K562 (cell line): ENCODE measurements at regions of chr17 and their contacts with region 1.

Region 1: DNA sequence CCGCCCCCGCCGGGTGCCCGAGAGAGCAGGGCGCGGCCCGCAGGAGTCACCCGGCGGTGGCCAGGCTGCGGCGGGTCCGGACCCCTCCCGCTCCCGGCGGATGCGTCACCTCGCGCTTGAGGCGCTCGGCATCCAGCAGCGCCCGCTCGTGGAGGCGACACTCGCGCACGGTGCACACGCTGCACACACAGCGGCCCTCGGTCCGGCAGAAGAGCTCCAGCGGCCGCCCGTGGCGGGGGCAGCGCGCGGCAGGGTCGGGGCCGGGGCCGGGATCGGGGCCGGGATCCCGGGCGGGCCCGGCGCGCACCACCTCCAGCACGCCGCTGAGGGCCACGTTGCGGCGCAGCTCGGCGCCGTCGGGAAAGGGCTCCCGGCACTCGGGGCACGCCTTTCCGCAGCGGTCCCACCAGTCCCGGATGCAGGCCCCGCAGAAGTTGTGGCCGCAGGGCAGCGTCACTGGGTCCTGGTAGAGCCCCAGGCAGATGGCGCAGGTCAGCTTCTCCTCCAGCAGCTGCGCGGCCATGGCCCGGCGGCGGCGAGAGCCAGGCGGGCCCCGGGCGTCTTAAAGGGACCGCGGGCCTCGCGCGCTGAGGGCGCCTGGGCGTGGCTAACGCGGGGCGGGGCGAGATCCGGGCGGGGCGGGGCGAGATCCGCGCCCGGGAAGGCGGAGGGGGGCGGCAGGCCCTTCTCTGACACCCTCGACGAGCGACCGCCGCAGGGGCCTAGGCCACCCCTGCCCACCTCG is at the start of gene TRIM65:
- DNase-seq: peak; percentile 87 to 93 (median 92)
- ATAC-seq: peak; percentile 89
- H3K4me3 ChIP-seq: peak within 1 kb of the TSS; percentile 93
- H3K27ac ChIP-seq: peak within 1 kb of the TSS; percentile 96
- H3K4me1 ChIP-seq: peaks cover 13 to 81% of the 10 kb centered on the region in 2 experiments; a peak in 4 of 5 replicates
- H3K27me3 ChIP-seq: no peaks in the 10 kb centered on the region
- CTCF ChIP-seq: peak; percentile 41 to 88 (median 69); a peak in 5 of 6 replicates
- EP300 ChIP-seq: no peak
- POLR2A ChIP-seq: peak; percentile 88
- RAD21 ChIP-seq: peak; percentile 76 to 77
- polyA plus RNA-seq, gene TRIM65: 2.8 to 5.8 TPM

Region 2: DNA sequence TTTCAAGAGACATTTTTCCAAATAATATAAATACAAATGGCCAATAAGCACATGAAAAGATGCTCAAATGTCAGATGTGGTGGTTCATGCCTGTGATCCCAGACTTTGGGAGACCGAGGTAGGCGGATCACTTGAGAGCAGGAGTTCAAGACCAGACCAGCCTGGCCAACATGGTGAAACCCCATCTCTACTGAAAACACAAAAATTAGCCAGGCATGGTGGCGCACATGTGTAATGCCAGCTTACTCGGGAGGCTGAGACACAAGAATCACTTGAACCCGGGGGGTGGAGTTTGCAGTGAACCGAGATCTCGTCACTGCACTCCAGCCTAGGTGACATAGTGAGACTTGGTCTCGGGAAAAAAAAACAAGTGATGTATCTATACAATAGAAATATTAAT is 128.7 kb before region 1 on chr17:
- CTCF ChIA-PET with region 1: no interaction called
- POLR2A ChIA-PET with region 1: no interaction called
- in situ Hi-C with region 1: no loop called
- intact Hi-C with region 1: no loop called
- DNase-seq: no peak
- ATAC-seq: no peak
- H3K4me3 ChIP-seq: no peak overlapping the region
- H3K27ac ChIP-seq: no peak overlapping the region
- H3K4me1 ChIP-seq: peaks cover 12 to 32% of the 10 kb centered on the region in 2 experiments
- H3K27me3 ChIP-seq: no peaks in the 10 kb centered on the region
- CTCF ChIP-seq: no peak
- EP300 ChIP-seq: no peak
- POLR2A ChIP-seq: no peak
- RAD21 ChIP-seq: no peak

Region 3: GRCh38 chr17:75855310-75856081 is 41.1 kb before region 1 on chr17 and contains the start of gene WBP2:
- CTCF ChIA-PET with region 1: interaction called, 16 read pairs
- POLR2A ChIA-PET with region 1: interaction called, 10 read pairs
- in situ Hi-C with region 1: no loop called
- intact Hi-C with region 1: loop called (anchors 2 kb)
- DNase-seq: peak; percentile 91 to 100 (median 95)
- ATAC-seq: peak; percentile 90
- H3K4me3 ChIP-seq: peak within 1 kb of the TSS; percentile 88
- H3K27ac ChIP-seq: peak within 1 kb of the TSS; percentile 93
- H3K4me1 ChIP-seq: peaks cover 31% of the 10 kb centered on the region in 2 experiments
- H3K27me3 ChIP-seq: no peaks in the 10 kb centered on the region
- CTCF ChIP-seq: peak; percentile 59 to 76 (median 66)
- EP300 ChIP-seq: no peak
- POLR2A ChIP-seq: peak; percentile 98
- RAD21 ChIP-seq: peak; percentile 57 to 59; a peak in 3 of 4 replicates
- polyA plus RNA-seq, gene WBP2: 2.2 to 3.7 TPM

Region 4: GRCh38 chr17:75877752-75878173 is 18.8 kb before region 1 on chr17:
- CTCF ChIA-PET with region 1: no interaction called
- POLR2A ChIA-PET with region 1: interaction called, 169 read pairs
- in situ Hi-C with region 1: no loop called
- intact Hi-C with region 1: no loop called
- DNase-seq: peak in 3 of 4 experiments; percentile 54 to 65 (median 63)
- ATAC-seq: peak; percentile 65
- H3K4me3 ChIP-seq: peak overlapping the region; percentile 45
- H3K27ac ChIP-seq: no peak overlapping the region
- H3K4me1 ChIP-seq: peaks cover 7 to 67% of the 10 kb centered on the region in 2 experiments
- H3K27me3 ChIP-seq: no peaks in the 10 kb centered on the region
- CTCF ChIP-seq: peak in 2 of 3 experiments; percentile 46 to 69; a peak in 4 of 6 replicates
- EP300 ChIP-seq: no peak
- POLR2A ChIP-seq: no peak
- RAD21 ChIP-seq: peak in 1 of 2 experiments; percentile 34; a peak in 2 of 4 replicates